ENCODE measurements at regions of chr15 and their contacts with region 1.

Region 1: DNA sequence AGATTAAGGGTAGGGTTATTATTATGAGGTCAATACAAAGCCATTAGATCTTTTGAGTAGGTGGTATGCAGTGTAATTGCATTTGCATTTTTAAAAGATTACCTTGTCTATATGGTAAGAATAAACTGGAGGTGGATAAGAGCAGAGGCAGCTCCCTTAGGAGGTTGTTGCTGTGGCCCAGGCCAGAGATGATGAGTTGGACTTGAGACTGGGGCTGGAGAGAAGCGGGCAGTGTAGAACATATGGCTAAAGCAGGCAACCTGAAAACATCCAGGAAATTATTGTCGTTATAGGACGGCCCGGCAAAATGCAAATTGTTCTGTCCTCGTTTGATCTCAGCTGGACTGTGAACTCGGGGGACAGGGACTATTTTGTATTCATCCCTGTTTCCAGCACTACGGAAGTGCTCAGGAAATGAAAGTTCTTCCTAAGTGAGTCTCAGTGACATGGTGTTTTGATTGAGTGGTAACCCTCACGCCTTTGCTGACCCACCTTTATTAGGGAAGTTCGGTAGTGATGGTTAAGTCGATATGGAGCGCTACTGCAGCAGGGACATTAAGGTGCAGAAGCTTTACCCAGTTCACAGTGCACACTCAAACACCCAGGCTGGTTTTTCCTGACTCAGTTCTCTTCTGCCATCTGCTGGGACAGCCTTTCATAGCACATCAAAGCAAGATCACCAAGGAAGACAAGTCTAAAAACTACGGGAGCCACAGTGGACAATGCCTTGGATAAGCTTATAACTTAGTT is 27.2 kb upstream of the VPS33B start:
- DNase-seq: peak; percentile 63 to 81
- ATAC-seq: peak; percentile 95 to 96
- H3K4me3 ChIP-seq: no peak overlapping the region
- H3K27ac ChIP-seq: no peak overlapping the region
- H3K4me1 ChIP-seq: no peaks in the 10 kb centered on the region
- CTCF ChIP-seq: peak; percentile 83
- EP300 ChIP-seq: no peak
- POLR2A ChIP-seq: no peak
- RAD21 ChIP-seq: peak; percentile 83 to 86

Region 2: DNA sequence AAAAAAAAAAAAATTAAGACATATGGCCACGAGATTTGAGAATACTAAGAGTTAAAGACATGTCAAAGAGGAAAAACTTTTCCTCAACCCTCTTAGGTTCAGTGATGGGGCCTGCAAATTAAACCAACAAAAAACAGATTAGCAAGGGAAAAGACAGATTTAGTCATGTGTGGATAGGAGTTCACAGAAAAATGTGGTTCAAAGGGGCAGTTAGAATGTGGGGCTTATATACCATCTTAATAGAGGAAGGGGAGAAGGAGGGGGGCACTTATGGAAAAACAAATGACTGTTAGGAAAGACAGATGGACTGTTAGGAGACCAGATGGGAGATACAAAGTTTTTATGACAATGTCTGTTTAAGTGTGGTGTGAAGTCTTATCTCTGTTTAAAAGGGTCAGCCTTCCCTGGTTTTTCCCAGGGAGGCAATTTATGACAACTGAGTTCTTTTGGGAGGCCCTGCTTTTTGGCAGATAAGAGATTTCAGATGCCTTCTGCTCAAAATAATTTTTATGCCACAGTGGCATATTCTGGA is 249.8 kb before region 1 on chr15:
- CTCF ChIA-PET with region 1: no interaction called
- POLR2A ChIA-PET with region 1: no interaction called
- DNase-seq: no peak
- ATAC-seq: no peak
- H3K4me3 ChIP-seq: no peak overlapping the region
- H3K27ac ChIP-seq: no peak overlapping the region
- H3K4me1 ChIP-seq: no peaks in the 10 kb centered on the region
- CTCF ChIP-seq: no peak
- EP300 ChIP-seq: no peak
- POLR2A ChIP-seq: no peak
- RAD21 ChIP-seq: no peak

Region 3: DNA sequence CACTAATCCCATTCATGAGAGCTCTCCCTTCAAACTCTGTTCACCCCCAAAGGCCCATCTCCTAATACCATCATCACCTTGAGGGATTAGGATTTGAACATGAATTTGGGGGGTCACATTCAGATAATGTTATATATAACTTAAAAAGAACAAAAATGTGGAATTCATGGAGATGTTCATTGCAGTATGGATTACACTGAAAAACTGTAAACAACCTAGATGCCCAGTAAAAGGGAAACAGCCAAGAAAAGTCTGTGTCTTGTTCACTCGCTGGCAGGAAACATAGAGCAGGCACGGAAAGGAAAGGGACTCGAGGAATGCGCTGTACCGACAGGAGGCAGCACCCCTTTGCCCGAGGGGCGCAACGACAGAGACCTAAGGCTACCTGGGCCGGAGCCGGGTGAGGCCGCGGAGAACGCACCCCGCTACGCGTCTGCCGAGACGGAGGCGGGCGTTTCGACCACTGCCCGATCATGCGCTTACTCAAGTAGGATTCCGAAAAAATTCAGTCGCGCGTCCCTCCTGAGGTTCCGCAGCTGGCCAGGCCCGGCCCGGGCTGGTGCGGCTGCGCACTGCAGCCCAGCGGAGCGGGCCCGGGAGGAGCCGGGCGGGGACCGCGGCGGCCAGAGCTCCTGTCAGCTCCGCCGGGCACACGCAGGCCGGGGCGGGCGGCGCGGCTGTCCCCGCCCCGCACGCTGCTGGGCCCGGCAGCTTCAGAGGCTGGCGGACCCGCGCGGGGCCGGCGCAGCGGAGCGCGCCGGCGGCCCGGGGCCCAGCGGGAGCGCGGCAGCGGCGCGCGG is 147.3 kb before region 1 on chr15:
- CTCF ChIA-PET with region 1: interaction called, 11 read pairs
- POLR2A ChIA-PET with region 1: no interaction called
- DNase-seq: peak; percentile 88 to 99
- ATAC-seq: peak; percentile 88 to 94
- H3K4me3 ChIP-seq: peak overlapping the region; percentile 81
- H3K27ac ChIP-seq: peak overlapping the region; percentile 88
- H3K4me1 ChIP-seq: peaks cover 14% of the 10 kb centered on the region
- CTCF ChIP-seq: peak; percentile 90
- EP300 ChIP-seq: no peak
- POLR2A ChIP-seq: peak; percentile 91
- RAD21 ChIP-seq: peak; percentile 25 to 59; a peak in 4 of 5 replicates

Region 4: DNA sequence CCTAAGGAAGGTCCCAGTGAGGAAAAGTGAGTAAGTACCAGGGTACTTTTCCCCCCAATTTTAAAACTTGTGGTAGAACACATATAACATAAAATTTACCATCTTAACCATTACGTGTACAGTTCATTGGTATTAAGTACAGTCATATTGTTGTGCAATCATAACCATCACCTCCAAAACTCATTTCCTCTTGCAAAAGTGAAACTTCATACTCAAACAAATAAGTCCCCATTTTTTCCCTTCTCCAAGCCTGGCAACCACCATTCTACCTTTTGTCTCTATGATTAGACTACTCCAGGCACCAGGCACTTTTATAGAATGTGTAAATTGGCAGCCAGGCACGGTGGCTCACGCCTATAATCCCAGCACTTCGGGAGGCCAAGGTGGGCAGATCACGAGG is 67.4 kb before region 1 on chr15:
- CTCF ChIA-PET with region 1: interaction called, 17 read pairs
- POLR2A ChIA-PET with region 1: no interaction called
- DNase-seq: no peak
- ATAC-seq: no peak
- H3K4me3 ChIP-seq: no peak overlapping the region
- H3K27ac ChIP-seq: no peak overlapping the region
- H3K4me1 ChIP-seq: peaks cover 12% of the 10 kb centered on the region
- CTCF ChIP-seq: no peak
- EP300 ChIP-seq: no peak
- POLR2A ChIP-seq: no peak
- RAD21 ChIP-seq: no peak

Region 5: GRCh38 chr15:91032919-91033803 is 16.4 kb before region 1 on chr15:
- CTCF ChIA-PET with region 1: interaction called, 35 read pairs
- POLR2A ChIA-PET with region 1: no interaction called
- DNase-seq: peak in 1 of 2 experiments; percentile 73
- ATAC-seq: peak; percentile 76 to 88; a peak in 5 of 6 replicates
- H3K4me3 ChIP-seq: no peak overlapping the region
- H3K27ac ChIP-seq: no peak overlapping the region
- H3K4me1 ChIP-seq: no peaks in the 10 kb centered on the region
- CTCF ChIP-seq: peak; percentile 62
- EP300 ChIP-seq: no peak
- POLR2A ChIP-seq: no peak
- RAD21 ChIP-seq: peak; percentile 52 to 60

Region 6: GRCh38 chr15:91099616-91099994 is 50.1 kb after region 1 on chr15:
- CTCF ChIA-PET with region 1: no interaction called
- POLR2A ChIA-PET with region 1: no interaction called
- DNase-seq: peak in 1 of 2 experiments; percentile 48
- ATAC-seq: peak; percentile 44 to 69; a peak in 5 of 6 replicates
- H3K4me3 ChIP-seq: peak overlapping the region; percentile 45
- H3K27ac ChIP-seq: no peak overlapping the region
- H3K4me1 ChIP-seq: peaks cover 13% of the 10 kb centered on the region; the same call in 2 of the 3 replicates
- CTCF ChIP-seq: peak; percentile 23; the same call in 1 of the 3 replicates
- EP300 ChIP-seq: no peak
- POLR2A ChIP-seq: no peak
- RAD21 ChIP-seq: no peak